ENCODE measurements at regions of chr11 and their contacts with region 1.

Region 1: GRCh38 chr11:126607374-126607773 is 251.9 kb downstream of the ST3GAL4 start:
- DNase-seq: peak; percentile 61 to 78
- H3K4me3 ChIP-seq: peak overlapping the region in 1 of 4 experiments; percentile 39; a peak in 2 of 8 replicates
- H3K27ac ChIP-seq: no peak overlapping the region
- H3K4me1 ChIP-seq: peaks cover 8 to 15% (median 11%) of the 10 kb centered on the region in 4 experiments
- H3K27me3 ChIP-seq: no peaks in the 10 kb centered on the region; a peak in 3 of 7 replicates
- CTCF ChIP-seq: peak; percentile 92 to 96 (median 95)
- EP300 ChIP-seq: no peak
- POLR2A ChIP-seq: no peak
- RAD21 ChIP-seq: peak; percentile 96 to 97

Region 2: DNA sequence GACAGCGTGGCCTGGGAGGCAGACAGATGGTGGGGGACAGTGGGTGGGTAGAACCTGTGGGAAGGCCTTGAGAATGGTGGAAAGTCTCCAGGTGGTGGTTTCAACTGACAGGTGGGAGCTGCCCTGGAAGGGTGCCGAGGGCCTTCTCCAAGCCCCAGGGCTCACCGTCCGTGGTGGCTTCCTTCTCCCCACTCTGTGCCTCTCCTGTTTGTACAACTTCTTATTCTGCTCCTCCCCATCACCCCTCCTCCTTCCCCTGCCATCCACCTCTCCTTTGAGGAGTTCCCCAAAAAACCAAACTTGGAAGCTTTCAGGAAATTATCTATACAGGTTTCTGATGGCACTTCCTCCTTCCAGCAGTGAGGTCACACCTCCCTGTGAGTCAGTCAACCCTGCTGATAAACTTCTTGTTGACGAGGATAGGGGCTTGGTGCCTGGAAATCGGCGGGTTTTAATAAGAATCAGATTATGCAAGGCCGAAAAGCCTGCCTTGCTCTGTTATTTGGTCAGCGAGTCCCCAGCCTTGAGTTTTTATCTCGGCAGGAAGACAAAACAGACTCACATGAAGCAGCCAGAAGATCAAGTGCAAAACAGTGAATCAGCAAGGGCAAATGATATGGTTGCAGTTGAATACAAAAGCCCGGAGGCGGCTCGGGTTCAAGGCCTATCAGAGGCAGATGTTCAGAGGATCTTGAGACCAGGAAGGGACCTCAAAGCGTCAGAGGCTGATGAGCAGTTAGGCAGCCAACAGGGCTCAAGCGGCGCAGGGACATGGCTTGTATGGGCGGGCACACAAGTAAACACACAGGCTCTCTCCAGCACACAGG is 261.4 kb before region 1 on chr11:
- CTCF ChIA-PET with region 1: no interaction called
- POLR2A ChIA-PET with region 1: no interaction called
- DNase-seq: no peak
- H3K4me3 ChIP-seq: no peak overlapping the region
- H3K27ac ChIP-seq: no peak overlapping the region
- H3K4me1 ChIP-seq: peaks cover 0 to 14% (median 6%) of the 10 kb centered on the region in 4 experiments; a peak in 4 of 7 replicates
- H3K27me3 ChIP-seq: no peaks in the 10 kb centered on the region
- CTCF ChIP-seq: no peak
- EP300 ChIP-seq: no peak
- POLR2A ChIP-seq: no peak
- RAD21 ChIP-seq: no peak

Region 3: DNA sequence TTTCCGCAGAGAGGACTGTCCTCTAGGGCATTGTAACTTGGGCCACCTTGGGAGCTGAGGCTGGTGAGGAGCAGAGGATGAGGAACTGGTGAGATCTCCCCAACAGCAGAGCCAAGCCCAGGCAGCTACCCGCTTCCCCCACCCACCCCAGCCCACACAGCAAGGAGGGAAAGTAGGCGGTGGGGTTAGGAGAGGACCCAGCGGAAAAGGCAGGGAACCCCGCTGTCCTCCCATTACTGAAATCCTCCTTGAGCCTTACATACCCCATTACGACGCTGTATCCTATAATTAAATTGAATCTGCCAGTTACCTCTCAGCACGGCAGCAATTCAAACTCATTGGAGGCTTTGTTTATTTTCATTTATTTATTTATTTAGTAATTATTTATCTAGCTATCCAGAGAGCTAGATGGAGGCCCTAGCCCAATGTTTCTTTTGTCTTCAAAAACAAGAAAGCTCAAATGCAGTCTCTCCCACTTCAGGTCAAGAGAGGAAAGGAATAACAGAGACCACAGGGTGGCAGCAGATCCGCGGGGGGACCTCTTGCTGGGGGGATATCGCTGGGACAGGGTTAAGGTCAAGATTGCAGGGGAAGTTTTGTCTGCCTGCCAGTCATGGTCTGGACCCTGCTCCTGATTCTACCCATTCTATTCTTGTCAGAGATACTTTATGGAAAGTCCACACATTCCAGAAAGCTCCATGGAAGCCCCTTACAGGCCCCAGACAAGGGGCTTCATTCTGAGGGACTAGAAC is 33.9 kb before region 1 on chr11:
- CTCF ChIA-PET with region 1: interaction called, 16 read pairs
- POLR2A ChIA-PET with region 1: no interaction called
- DNase-seq: no peak
- H3K4me3 ChIP-seq: no peak overlapping the region
- H3K27ac ChIP-seq: no peak overlapping the region
- H3K4me1 ChIP-seq: peaks cover 0 to 5% (median 2%) of the 10 kb centered on the region in 4 experiments; a peak in 3 of 7 replicates
- H3K27me3 ChIP-seq: no peaks in the 10 kb centered on the region
- CTCF ChIP-seq: peak; percentile 51 to 66 (median 65)
- EP300 ChIP-seq: no peak
- POLR2A ChIP-seq: no peak
- RAD21 ChIP-seq: peak; percentile 78 to 86

Region 4: GRCh38 chr11:126628790-126629621 is 21.6 kb after region 1 on chr11:
- CTCF ChIA-PET with region 1: interaction called, 28 read pairs
- POLR2A ChIA-PET with region 1: no interaction called
- DNase-seq: no peak
- H3K4me3 ChIP-seq: no peak overlapping the region
- H3K27ac ChIP-seq: no peak overlapping the region
- H3K4me1 ChIP-seq: no peaks in the 10 kb centered on the region; a peak in 3 of 7 replicates
- H3K27me3 ChIP-seq: peaks cover 0 to 3% (median 0%) of the 10 kb centered on the region in 4 experiments; a peak in 1 of 7 replicates
- CTCF ChIP-seq: peak in 2 of 3 experiments; percentile 6 to 13; a peak in 2 of 4 replicates
- EP300 ChIP-seq: no peak
- POLR2A ChIP-seq: no peak
- RAD21 ChIP-seq: peak in 1 of 2 experiments; percentile 10; a peak in 1 of 4 replicates

Region 5: DNA sequence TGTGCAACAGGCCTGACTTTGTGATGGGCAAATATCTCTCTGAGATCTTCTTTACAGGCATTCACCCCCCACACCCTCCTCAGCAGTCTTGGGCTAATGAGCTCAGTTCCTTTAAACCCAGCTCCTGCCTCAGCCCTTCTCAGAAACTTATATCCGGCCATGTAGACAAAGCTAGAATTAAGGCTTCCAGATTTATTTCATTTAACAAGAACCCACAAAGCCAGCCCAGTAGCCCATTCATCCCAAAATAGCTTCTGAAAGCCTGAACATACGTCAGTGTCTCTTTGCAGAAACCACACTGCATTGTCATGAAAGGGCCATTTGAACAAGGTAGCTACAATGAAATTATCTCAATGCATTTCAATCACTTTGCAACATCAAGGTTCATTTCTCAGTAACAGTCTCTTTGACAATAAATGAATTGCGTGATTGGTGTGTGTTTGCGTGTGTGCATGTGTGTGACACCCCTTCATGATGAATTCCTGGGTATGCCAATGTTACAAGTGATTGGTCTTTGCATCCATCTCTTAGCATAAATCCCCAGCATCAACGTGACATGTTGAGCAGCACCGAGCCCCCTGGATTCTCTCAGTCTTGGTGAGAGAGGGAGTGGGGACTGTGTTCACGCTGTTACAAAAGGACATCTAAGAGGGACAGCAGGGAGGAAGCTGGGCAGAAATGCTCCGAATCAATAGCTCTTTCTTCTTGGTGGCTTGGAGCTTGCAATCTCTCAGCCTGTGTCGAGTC is 93.6 kb after region 1 on chr11:
- CTCF ChIA-PET with region 1: interaction called, 12 read pairs
- POLR2A ChIA-PET with region 1: no interaction called
- DNase-seq: no peak
- H3K4me3 ChIP-seq: no peak overlapping the region
- H3K27ac ChIP-seq: no peak overlapping the region
- H3K4me1 ChIP-seq: peaks cover 0 to 19% (median 2%) of the 10 kb centered on the region in 4 experiments; a peak in 4 of 7 replicates
- H3K27me3 ChIP-seq: no peaks in the 10 kb centered on the region; a peak in 1 of 7 replicates
- CTCF ChIP-seq: no peak
- EP300 ChIP-seq: no peak
- POLR2A ChIP-seq: no peak
- RAD21 ChIP-seq: no peak

Region 6: DNA sequence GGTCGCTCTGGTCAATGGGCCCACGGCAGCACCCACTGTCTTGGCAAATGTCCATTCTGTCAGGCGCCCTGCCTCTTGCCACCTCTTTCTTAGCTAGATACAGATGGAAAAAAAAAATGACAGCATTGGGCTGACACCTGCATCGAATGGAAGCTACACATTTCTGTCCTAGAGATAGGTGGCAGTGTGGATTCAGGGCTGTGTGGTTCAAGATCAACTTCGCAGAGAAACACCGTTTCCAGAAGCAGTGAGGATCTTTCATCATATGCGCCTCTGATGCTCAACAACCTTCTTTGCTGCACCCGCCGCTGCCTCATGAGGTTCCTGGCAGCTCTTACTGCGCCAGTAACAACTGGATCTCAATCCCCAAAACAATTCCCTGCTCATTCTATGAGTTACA is 156.9 kb after region 1 on chr11:
- CTCF ChIA-PET with region 1: interaction called, 17 read pairs
- POLR2A ChIA-PET with region 1: no interaction called
- DNase-seq: no peak
- H3K4me3 ChIP-seq: no peak overlapping the region
- H3K27ac ChIP-seq: no peak overlapping the region
- H3K4me1 ChIP-seq: no peaks in the 10 kb centered on the region
- H3K27me3 ChIP-seq: no peaks in the 10 kb centered on the region
- CTCF ChIP-seq: peak in 1 of 3 experiments; percentile 43; a peak in 2 of 4 replicates
- EP300 ChIP-seq: no peak
- POLR2A ChIP-seq: no peak
- RAD21 ChIP-seq: peak; percentile 34 to 51; a peak in 3 of 4 replicates

Region 7: GRCh38 chr11:126891556-126892217 is 284.3 kb after region 1 on chr11:
- CTCF ChIA-PET with region 1: interaction called, 10 read pairs
- POLR2A ChIA-PET with region 1: no interaction called
- DNase-seq: no peak
- H3K4me3 ChIP-seq: no peak overlapping the region
- H3K27ac ChIP-seq: no peak overlapping the region
- H3K4me1 ChIP-seq: peaks cover 4 to 12% (median 9%) of the 10 kb centered on the region in 4 experiments; a peak in 6 of 7 replicates
- H3K27me3 ChIP-seq: no peaks in the 10 kb centered on the region
- CTCF ChIP-seq: no peak
- EP300 ChIP-seq: no peak
- POLR2A ChIP-seq: no peak
- RAD21 ChIP-seq: no peak